Psoas muscle (tissue), 8 donors: ENCODE measurements at regions of chr1 and their contacts with region 1.

Region 1: GRCh38 chr1:147585640-147586383 is 44.5 kb downstream of the BCL9 start:
- DNase-seq: no peak
- ATAC-seq: peak in 2 of 4 donors; percentile 15 to 36
- H3K4me3 ChIP-seq: no peak overlapping the region
- H3K27ac ChIP-seq: no peak overlapping the region
- H3K4me1 ChIP-seq: peaks cover 29% of the 10 kb centered on the region
- H3K27me3 ChIP-seq: no peaks in the 10 kb centered on the region
- CTCF ChIP-seq: no peak

Region 2: DNA sequence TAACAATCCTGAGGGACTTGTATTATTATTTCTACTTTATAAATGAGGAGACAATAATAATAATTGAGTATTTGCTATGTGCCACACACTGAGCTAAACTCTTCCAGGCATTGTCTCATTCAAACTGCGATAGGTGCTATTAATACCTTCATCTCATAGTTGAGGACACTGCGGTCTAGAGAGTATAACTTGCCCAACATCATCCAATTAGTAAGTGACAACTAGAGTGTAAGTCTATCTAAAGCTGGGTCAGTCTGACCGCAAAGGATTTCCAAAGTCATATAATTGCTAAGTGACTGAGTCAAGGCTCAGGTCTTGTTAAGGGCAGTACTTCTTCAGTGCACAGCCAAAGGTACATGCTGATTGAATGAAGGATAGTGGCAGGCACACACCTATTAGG is 34.8 kb before region 1 on chr1:
- intact Hi-C with region 1: loop called in 1 of 2 experiments (anchors 5 kb)
- DNase-seq: no peak
- ATAC-seq: peak; percentile 93 to 99 (median 98)
- H3K4me3 ChIP-seq: no peak overlapping the region
- H3K27ac ChIP-seq: no peak overlapping the region
- H3K4me1 ChIP-seq: peaks cover 31% of the 10 kb centered on the region
- H3K27me3 ChIP-seq: no peaks in the 10 kb centered on the region
- CTCF ChIP-seq: no peak

Region 3: GRCh38 chr1:147627435-147628110 is 41.8 kb after region 1 on chr1:
- intact Hi-C with region 1: no loop called
- DNase-seq: peak; percentile 43 to 72
- ATAC-seq: peak; percentile 80 to 85 (median 83)
- H3K4me3 ChIP-seq: no peak overlapping the region
- H3K27ac ChIP-seq: no peak overlapping the region
- H3K4me1 ChIP-seq: peaks cover 15% of the 10 kb centered on the region
- H3K27me3 ChIP-seq: no peaks in the 10 kb centered on the region
- CTCF ChIP-seq: peak; percentile 95